Esophagus muscularis mucosa (tissue), 4 donors: ENCODE measurements at regions of chr9 and their contacts with region 1.

Region 1: DNA sequence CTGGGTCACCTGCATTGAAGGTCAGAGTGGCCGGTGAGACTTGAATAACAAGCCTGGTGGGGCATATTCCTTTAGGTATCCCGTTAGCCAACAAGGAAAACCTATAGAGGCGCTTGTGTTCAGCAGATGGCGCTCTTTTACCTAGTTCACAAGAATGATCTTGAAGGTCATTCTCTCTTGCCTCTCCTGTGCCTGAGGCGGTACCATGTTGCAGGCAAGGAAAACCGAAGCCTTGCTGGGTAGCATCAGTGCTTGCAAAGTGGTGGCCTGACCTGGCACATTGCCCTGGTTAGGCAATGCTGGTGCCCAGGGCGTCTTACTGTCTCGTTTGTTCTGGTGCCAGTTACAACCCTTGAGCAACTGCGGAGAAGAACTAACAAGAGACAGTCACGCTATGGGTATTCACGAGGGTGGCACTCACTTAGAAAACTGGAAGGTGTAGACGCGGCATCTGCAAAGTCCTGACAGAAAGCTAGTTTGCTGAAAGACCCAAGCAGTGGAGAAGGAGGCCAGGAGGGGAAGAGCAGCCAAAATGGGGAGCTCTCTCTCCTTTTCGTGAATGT is 56.7 kb downstream of the AOPEP start:
- DNase-seq: no peak
- H3K4me3 ChIP-seq: no peak overlapping the region
- H3K27ac ChIP-seq: peak overlapping the region; percentile 13 to 40 (median 31)
- H3K4me1 ChIP-seq: peaks cover 9 to 16% (median 12%) of the 10 kb centered on the region in 4 donors
- H3K27me3 ChIP-seq: no peaks in the 10 kb centered on the region
- CTCF ChIP-seq: peak; percentile 67 to 81 (median 77)
- EP300 ChIP-seq: no peak
- POLR2A ChIP-seq: no peak

Region 2: GRCh38 chr9:94743035-94743954 is 39.9 kb before region 1 on chr9:
- intact Hi-C with region 1: no loop called
- DNase-seq: no peak
- H3K4me3 ChIP-seq: no peak overlapping the region
- H3K27ac ChIP-seq: no peak overlapping the region
- H3K4me1 ChIP-seq: peaks cover 0 to 5% (median 0%) of the 10 kb centered on the region in 4 donors
- H3K27me3 ChIP-seq: no peaks in the 10 kb centered on the region
- CTCF ChIP-seq: no peak
- EP300 ChIP-seq: no peak
- POLR2A ChIP-seq: no peak

Region 3: GRCh38 chr9:95087659-95088242 is 304.6 kb after region 1 on chr9:
- intact Hi-C with region 1: loop called (anchors 10 kb)
- DNase-seq: no peak
- H3K4me3 ChIP-seq: no peak overlapping the region
- H3K27ac ChIP-seq: peak overlapping the region; percentile 86 to 95 (median 86)
- H3K4me1 ChIP-seq: peaks cover 92 to 100% (median 99%) of the 10 kb centered on the region in 4 donors
- H3K27me3 ChIP-seq: no peaks in the 10 kb centered on the region
- CTCF ChIP-seq: peak; percentile 8 to 22 (median 14)
- EP300 ChIP-seq: no peak
- POLR2A ChIP-seq: no peak

Region 4: DNA sequence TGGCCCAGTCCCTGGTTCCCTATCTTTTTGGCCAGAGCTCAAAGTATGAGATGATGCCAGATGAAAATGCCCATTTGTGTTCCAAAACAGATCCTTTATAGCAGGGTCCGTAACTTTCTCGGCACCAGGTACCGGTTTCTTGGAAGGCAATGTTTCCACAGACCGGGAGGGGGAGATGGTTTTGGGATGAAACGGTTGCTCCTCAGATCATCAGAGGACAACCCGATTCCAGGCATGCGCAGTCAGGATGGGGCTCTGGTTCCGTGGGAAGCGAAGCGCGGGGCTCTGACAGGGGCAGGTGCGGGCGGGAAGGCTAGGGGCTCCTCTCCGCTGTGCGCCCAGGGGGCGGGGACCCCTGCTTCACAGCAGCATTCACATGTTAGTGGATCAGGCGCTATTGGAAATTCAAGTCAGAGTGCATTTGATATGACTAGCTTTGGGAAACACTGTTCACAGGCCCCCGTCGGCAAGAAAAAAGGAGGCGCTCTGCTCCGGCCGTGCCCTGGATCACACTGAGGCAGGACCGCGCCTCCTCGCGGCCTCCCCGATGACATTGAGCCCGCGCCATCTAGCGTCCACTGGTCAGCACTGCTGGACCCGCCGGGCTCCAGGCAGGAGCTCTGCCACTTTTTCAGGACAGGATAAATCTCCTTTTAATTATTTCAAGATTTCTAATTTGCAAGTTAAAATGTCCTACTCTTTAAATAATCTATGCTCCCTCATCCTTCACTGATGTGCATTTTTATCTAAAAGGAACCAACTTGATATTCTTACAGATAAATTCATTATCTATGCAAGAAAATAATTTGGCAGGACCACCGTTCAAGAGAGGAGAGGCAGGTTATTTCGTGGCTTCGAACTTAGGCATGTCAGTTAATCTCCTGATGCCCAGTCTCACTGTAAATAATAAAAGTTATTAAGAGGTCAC is 344.3 kb after region 1 on chr9:
- intact Hi-C with region 1: loop called (anchors 2 kb)
- DNase-seq: no peak
- H3K4me3 ChIP-seq: peak overlapping the region; percentile 41 to 55 (median 50)
- H3K27ac ChIP-seq: peak overlapping the region; percentile 29 to 61 (median 46)
- H3K4me1 ChIP-seq: peaks cover 6 to 46% (median 41%) of the 10 kb centered on the region in 4 donors
- H3K27me3 ChIP-seq: no peaks in the 10 kb centered on the region
- CTCF ChIP-seq: peak; percentile 92 to 98 (median 98)
- EP300 ChIP-seq: no peak
- POLR2A ChIP-seq: no peak

Region 5: DNA sequence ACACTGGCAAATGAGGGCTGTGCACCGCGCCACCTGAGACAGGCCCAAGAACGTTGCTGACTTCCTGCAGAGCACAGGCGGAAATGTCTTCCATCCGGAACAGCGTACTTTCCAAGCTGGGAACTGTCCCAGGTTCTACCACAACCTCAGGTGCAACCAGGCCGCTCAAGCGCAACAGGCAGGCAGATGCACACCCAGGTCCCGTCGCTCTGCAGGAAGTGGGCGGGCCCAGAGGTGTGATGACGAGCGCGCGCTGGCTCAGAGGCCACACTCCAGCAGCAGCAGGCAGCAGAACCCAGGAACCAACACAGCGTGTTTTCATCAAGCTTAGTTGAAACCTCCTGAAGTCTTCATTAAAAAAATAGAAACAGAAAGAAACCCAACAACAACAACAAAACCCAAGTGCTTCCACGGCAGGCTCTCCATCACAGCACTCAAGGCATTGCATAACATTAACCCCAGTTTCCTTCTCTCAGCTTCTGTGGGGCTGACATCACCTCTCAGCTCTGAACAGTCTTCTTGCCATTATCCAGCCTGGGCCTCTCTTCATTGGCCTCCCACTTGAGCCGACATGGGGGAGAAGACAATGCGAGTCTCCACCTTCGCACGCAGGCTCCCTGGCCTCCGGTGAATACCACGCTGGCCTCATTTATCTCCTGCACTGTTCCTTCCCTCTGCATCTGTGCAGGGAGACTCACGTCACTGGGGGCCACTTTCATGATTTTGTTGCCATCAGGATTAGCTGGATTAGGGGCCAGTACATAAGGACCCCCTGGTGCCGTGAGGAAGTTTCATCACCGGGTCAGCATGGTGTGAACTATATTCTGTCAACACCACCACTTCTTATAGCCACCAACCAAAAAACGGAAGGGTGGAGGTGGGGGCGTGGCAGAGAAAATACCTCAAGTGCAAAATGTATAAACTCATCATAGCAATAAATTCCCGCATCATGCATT is 711.5 kb after region 1 on chr9:
- intact Hi-C with region 1: no loop called
- DNase-seq: no peak
- H3K4me3 ChIP-seq: no peak overlapping the region
- H3K27ac ChIP-seq: peak overlapping the region in 1 of 4 donors; percentile 31
- H3K4me1 ChIP-seq: peaks cover 6 to 39% (median 35%) of the 10 kb centered on the region in 4 donors
- H3K27me3 ChIP-seq: no peaks in the 10 kb centered on the region
- CTCF ChIP-seq: no peak
- EP300 ChIP-seq: no peak
- POLR2A ChIP-seq: no peak

Region 6: GRCh38 chr9:96453625-96454024 is 1670.4 kb after region 1 on chr9:
- intact Hi-C with region 1: no loop called
- DNase-seq: no peak
- H3K4me3 ChIP-seq: no peak overlapping the region
- H3K27ac ChIP-seq: peak overlapping the region in 1 of 4 donors; percentile 29
- H3K4me1 ChIP-seq: peaks cover 7 to 49% (median 41%) of the 10 kb centered on the region in 4 donors
- H3K27me3 ChIP-seq: no peaks in the 10 kb centered on the region
- CTCF ChIP-seq: peak; percentile 51 to 67 (median 61)
- EP300 ChIP-seq: no peak
- POLR2A ChIP-seq: no peak